Naive thymus-derived CD4-positive, alpha-beta T cell (primary cell): ENCODE measurements at regions of chr7 and their contacts with region 1.

Region 1: GRCh38 chr7:110977127-110977737 is 113.7 kb upstream of the LRRN3 start:
- DNase-seq: peak in 6 of 9 donors; percentile 17 to 53 (median 43)
- ATAC-seq: peak; percentile 57
- H3K4me3 ChIP-seq: no peak overlapping the region
- H3K4me3 Mint-ChIP-seq: peak overlapping the region; percentile 18 to 83 (median 71)
- H3K27ac ChIP-seq: peak overlapping the region; percentile 51
- H3K27ac Mint-ChIP-seq: peak overlapping the region; percentile 63 to 95 (median 82)
- H3K4me1 ChIP-seq: peaks cover 10 to 20% of the 10 kb centered on the region in 2 donors
- H3K4me1 Mint-ChIP-seq: peaks cover 10 to 76% (median 54%) of the 10 kb centered on the region in 7 donors
- H3K27me3 ChIP-seq: no peaks in the 10 kb centered on the region
- H3K27me3 Mint-ChIP-seq: no peaks in the 10 kb centered on the region

Region 2: DNA sequence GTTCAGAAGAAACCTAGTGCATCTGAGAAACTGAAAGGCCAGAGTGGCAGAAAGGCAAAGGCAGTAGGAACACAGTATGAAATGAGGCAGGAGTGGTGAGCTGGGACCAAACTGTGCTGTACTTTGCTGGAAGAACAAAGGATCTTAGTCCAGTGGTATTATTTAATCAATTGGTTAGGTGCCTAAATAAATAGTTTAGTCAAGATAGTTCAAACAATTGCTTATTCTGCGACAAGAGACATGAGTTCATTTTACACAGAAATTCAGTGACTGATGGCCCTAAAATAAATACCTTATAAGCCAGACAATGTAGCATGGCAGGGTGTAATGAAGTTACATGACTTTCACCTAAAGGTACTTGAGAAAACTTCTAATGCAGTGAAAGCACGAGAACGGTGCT is 68.1 kb before region 1 on chr7:
- CTCF ChIA-PET with region 1: no interaction called
- POLR2A ChIA-PET with region 1: no interaction called
- intact Hi-C with region 1: loop called in 1 of 2 experiments (anchors 5 kb)
- DNase-seq: no peak
- ATAC-seq: no peak
- H3K4me3 ChIP-seq: no peak overlapping the region
- H3K4me3 Mint-ChIP-seq: peak overlapping the region in 1 of 10 donors; percentile 1
- H3K27ac ChIP-seq: no peak overlapping the region
- H3K27ac Mint-ChIP-seq: no peak overlapping the region
- H3K4me1 ChIP-seq: peaks cover 0 to 8% of the 10 kb centered on the region in 2 donors
- H3K4me1 Mint-ChIP-seq: peaks cover 0 to 50% (median 35%) of the 10 kb centered on the region in 7 donors
- H3K27me3 ChIP-seq: no peaks in the 10 kb centered on the region
- H3K27me3 Mint-ChIP-seq: no peaks in the 10 kb centered on the region

Region 3: DNA sequence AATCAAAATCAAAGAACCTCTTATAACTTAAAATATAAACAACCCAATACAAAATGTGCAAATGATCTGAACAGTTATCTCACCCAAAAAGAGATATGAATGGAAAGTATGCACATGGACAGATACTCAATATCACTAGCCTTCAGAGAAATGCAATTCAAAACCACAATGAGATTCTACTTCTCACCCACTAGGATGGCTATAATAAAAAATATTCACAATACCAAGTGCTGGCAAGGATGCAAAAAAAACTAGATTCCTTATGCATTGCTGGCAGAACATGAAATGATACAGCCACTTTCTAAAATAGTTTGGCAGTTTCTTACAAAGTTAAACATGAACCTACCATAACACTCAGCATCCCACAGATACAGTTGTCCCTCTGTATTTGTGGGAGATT is 16.4 kb before region 1 on chr7:
- CTCF ChIA-PET with region 1: no interaction called
- POLR2A ChIA-PET with region 1: interaction called, 3 read pairs
- intact Hi-C with region 1: loop called in 1 of 2 experiments (anchors 1 kb)
- DNase-seq: no peak
- ATAC-seq: no peak
- H3K4me3 ChIP-seq: no peak overlapping the region
- H3K4me3 Mint-ChIP-seq: no peak overlapping the region
- H3K27ac ChIP-seq: no peak overlapping the region
- H3K27ac Mint-ChIP-seq: no peak overlapping the region
- H3K4me1 ChIP-seq: no peaks in the 10 kb centered on the region
- H3K4me1 Mint-ChIP-seq: peaks cover 1 to 16% (median 11%) of the 10 kb centered on the region in 7 donors
- H3K27me3 ChIP-seq: no peaks in the 10 kb centered on the region
- H3K27me3 Mint-ChIP-seq: no peaks in the 10 kb centered on the region

Region 4: GRCh38 chr7:110994028-110994967 is 17.1 kb after region 1 on chr7:
- CTCF ChIA-PET with region 1: no interaction called
- POLR2A ChIA-PET with region 1: interaction called, 3 read pairs
- intact Hi-C with region 1: loop called in 1 of 2 experiments (anchors 1 kb)
- DNase-seq: peak in 1 of 9 donors; percentile 37
- ATAC-seq: peak; percentile 64
- H3K4me3 ChIP-seq: no peak overlapping the region
- H3K4me3 Mint-ChIP-seq: peak overlapping the region; percentile 8 to 65 (median 54)
- H3K27ac ChIP-seq: peak overlapping the region; percentile 50
- H3K27ac Mint-ChIP-seq: peak overlapping the region; percentile 83 to 93 (median 91)
- H3K4me1 ChIP-seq: peaks cover 0 to 25% of the 10 kb centered on the region in 2 donors
- H3K4me1 Mint-ChIP-seq: peaks cover 18 to 43% (median 40%) of the 10 kb centered on the region in 7 donors
- H3K27me3 ChIP-seq: no peaks in the 10 kb centered on the region
- H3K27me3 Mint-ChIP-seq: no peaks in the 10 kb centered on the region

Region 5: DNA sequence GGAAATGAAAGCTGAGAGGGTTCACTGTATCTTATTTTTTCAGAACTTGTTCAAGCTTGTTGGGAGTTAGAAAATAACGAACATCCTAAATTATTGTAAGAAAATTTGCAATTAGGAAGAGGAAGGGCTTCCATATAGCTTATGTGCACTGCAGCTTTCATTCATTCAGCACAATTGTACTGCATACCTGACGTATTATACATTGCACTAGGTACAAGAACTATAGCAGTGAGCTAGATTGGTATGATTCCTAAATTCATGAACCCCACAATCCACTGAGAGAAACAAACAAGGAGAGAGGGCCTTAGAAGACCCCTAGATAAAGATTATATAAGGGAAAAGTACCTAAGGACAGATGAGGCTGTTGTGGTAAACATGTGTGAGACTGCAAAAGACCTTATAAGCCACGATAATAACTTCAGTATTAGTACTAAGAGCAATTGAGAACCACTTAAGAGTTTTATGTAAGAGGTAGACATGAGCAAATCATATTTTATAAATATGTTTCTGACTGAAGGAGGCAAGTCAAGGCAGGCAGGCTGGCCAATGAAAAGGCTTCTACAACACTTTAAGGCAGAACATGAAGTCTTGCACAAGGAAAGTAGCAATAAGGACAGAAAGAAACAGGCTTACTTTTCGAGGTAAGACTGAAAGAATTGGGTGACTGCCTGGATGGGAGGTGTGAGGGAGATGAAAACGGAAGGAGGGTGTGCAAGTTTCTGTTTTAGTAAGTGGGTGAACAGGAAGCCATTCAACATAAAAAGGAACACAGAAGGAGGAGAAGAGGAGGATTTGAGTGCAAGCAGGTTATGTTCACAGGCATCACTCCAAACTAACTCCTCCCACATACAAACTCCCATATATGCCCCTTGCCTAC is 35.8 kb after region 1 on chr7:
- CTCF ChIA-PET with region 1: no interaction called
- POLR2A ChIA-PET with region 1: no interaction called
- intact Hi-C with region 1: loop called (anchors 1 kb)
- DNase-seq: peak in 8 of 9 donors; percentile 44 to 76 (median 70)
- ATAC-seq: peak; percentile 86
- H3K4me3 ChIP-seq: peak overlapping the region; percentile 50
- H3K4me3 Mint-ChIP-seq: peak overlapping the region in 9 of 10 donors; percentile 59 to 83 (median 76)
- H3K27ac ChIP-seq: peak overlapping the region; percentile 82
- H3K27ac Mint-ChIP-seq: peak overlapping the region in 6 of 9 donors; percentile 84 to 96 (median 90)
- H3K4me1 ChIP-seq: peaks cover 13 to 77% of the 10 kb centered on the region in 2 donors
- H3K4me1 Mint-ChIP-seq: peaks cover 38 to 76% (median 48%) of the 10 kb centered on the region in 7 donors
- H3K27me3 ChIP-seq: no peaks in the 10 kb centered on the region
- H3K27me3 Mint-ChIP-seq: no peaks in the 10 kb centered on the region